CD4-positive, alpha-beta T cell (primary cell): ENCODE measurements at regions of chr3 and their contacts with region 1.

Region 1: DNA sequence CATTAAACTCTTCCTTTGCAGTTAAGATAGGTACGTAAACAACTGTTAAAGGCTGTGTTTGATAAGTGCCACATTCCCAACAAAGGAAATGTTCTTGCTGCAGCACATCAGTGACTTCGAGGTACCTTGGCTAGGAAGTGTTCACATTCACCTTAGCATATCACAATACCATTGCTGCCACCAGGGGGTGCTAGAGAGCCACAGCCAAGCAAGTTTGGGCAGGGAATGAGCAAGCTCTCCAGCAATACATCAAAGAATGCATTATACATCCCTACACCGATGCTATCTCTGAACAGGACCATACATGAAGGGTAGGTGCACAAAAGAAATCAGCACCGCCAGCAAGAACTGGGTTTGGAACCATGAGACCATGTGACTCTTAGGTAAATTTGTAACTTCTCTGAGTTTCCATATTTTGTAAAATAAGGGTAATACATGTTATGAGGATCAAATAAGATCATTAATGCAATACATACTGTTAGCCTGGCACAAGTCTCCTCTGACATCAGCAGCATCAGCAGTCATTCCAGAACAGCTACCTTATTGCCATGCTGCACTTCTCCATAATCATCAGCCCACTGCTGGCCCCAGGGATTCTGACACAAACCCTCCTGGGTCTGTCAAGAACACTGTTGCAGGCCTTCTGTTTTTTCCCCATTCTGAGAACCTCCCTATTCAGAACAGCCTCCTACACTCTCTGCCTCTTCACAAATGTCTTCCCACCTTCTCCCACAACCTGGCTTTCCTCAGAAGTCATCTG is 37.6 kb downstream of the RYK start:
- DNase-seq: peak; percentile 73 to 94 (median 84)
- ATAC-seq: peak; percentile 83
- H3K4me3 ChIP-seq: no peak overlapping the region
- H3K4me3 Mint-ChIP-seq: no peak overlapping the region
- H3K27ac ChIP-seq: no peak overlapping the region
- H3K27ac Mint-ChIP-seq: peak overlapping the region; percentile 19
- H3K4me1 ChIP-seq: no peaks in the 10 kb centered on the region
- H3K4me1 Mint-ChIP-seq: peaks cover 36% of the 10 kb centered on the region
- H3K27me3 ChIP-seq: no peaks in the 10 kb centered on the region
- H3K27me3 Mint-ChIP-seq: no peaks in the 10 kb centered on the region
- CTCF ChIP-seq: peak; percentile 99

Region 2: GRCh38 chr3:134149286-134149685 is 63.8 kb before region 1 on chr3:
- CTCF ChIA-PET with region 1: no interaction called
- POLR2A ChIA-PET with region 1: no interaction called
- intact Hi-C with region 1: no loop called
- DNase-seq: no peak
- ATAC-seq: no peak
- H3K4me3 ChIP-seq: no peak overlapping the region
- H3K4me3 Mint-ChIP-seq: no peak overlapping the region
- H3K27ac ChIP-seq: no peak overlapping the region
- H3K27ac Mint-ChIP-seq: no peak overlapping the region
- H3K4me1 ChIP-seq: no peaks in the 10 kb centered on the region
- H3K4me1 Mint-ChIP-seq: peaks cover 3% of the 10 kb centered on the region
- H3K27me3 ChIP-seq: no peaks in the 10 kb centered on the region
- H3K27me3 Mint-ChIP-seq: no peaks in the 10 kb centered on the region
- CTCF ChIP-seq: no peak

Region 3: DNA sequence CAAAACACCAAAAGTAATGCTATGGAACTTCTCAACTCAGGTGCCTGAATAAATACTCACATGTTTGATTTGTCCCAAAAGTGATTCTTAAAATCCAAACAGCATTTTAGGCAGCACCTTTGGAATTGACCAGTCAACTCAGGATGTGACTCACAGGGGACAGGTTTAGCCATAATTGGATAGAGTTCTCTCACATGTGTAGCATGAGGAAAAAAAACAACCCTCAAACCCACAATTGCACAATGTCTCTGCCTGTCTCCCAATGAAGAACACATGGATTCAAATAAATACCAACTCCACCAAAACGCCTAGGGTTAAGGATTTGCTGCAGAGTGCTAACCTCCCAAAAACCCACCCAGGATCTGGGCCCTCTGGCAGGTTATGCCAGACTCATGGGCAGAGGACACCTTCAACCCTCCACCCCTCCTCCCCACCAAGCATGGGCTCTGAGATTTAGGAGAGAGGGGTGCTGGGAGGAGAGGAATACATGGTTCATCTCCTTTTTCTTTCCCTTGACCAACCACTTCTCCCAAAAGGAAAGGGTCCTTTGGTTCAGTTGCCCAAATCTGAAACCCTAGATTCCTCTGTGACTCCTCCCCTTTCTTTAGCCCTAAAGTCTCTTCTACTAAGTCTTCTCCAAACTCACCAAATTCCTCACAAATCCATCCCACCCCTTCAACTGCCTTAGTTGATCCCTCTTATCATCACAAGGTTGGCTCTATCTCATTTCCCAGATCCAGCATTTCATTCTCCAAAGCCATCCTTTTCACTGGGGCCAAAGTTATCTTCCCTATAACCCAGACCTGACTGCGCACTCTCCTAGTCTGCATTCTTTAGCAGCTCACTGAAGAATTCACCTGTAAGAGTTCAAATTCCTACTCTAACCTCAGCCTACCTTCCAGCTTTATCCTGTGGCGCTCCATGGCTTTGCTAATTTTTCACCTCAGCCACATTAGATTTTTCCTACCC is 29.8 kb after region 1 on chr3:
- CTCF ChIA-PET with region 1: interaction called, 12 read pairs
- POLR2A ChIA-PET with region 1: no interaction called
- intact Hi-C with region 1: no loop called
- DNase-seq: no peak
- ATAC-seq: no peak
- H3K4me3 ChIP-seq: no peak overlapping the region
- H3K4me3 Mint-ChIP-seq: peak overlapping the region; percentile 12
- H3K27ac ChIP-seq: no peak overlapping the region
- H3K27ac Mint-ChIP-seq: no peak overlapping the region
- H3K4me1 ChIP-seq: peaks cover 23% of the 10 kb centered on the region
- H3K4me1 Mint-ChIP-seq: peaks cover 85% of the 10 kb centered on the region
- H3K27me3 ChIP-seq: no peaks in the 10 kb centered on the region
- H3K27me3 Mint-ChIP-seq: no peaks in the 10 kb centered on the region
- CTCF ChIP-seq: no peak

Region 4: GRCh38 chr3:134299185-134299887 is 86.2 kb after region 1 on chr3:
- CTCF ChIA-PET with region 1: no interaction called
- POLR2A ChIA-PET with region 1: no interaction called
- intact Hi-C with region 1: loop called in 1 of 2 experiments (anchors 2 kb)
- DNase-seq: peak in 1 of 14 experiments; percentile 11
- ATAC-seq: no peak
- H3K4me3 ChIP-seq: no peak overlapping the region
- H3K4me3 Mint-ChIP-seq: no peak overlapping the region
- H3K27ac ChIP-seq: no peak overlapping the region
- H3K27ac Mint-ChIP-seq: no peak overlapping the region
- H3K4me1 ChIP-seq: peaks cover 5% of the 10 kb centered on the region
- H3K4me1 Mint-ChIP-seq: no peaks in the 10 kb centered on the region
- H3K27me3 ChIP-seq: no peaks in the 10 kb centered on the region
- H3K27me3 Mint-ChIP-seq: peaks cover 13% of the 10 kb centered on the region
- CTCF ChIP-seq: no peak

Region 5: DNA sequence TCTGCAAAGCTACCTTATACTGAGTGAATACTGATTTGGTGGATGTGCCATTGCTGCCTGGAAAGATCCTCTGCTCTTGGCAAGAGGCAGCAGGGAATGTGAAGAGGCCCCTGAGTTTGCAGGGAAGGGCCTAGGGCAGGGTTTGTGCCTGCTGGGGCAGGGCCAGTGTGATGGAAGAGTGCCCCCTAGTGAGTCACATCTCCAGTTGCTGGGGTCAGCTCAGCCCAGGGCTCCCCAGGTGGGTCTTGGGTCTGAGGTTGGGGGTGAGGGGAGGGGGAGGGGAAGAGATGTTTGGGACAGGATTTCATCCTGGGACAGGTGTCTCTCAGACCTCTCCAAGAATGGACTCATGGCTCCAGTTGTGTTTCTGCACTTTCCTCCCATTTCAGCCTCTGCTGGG is 165.3 kb after region 1 on chr3:
- CTCF ChIA-PET with region 1: interaction called, 5 read pairs
- POLR2A ChIA-PET with region 1: no interaction called
- intact Hi-C with region 1: loop called (anchors 1 to 2 kb)
- DNase-seq: peak in 7 of 14 experiments; percentile 10 to 65 (median 49)
- ATAC-seq: no peak
- H3K4me3 ChIP-seq: no peak overlapping the region
- H3K4me3 Mint-ChIP-seq: no peak overlapping the region
- H3K27ac ChIP-seq: no peak overlapping the region
- H3K27ac Mint-ChIP-seq: no peak overlapping the region
- H3K4me1 ChIP-seq: peaks cover 15% of the 10 kb centered on the region
- H3K4me1 Mint-ChIP-seq: peaks cover 12% of the 10 kb centered on the region
- H3K27me3 ChIP-seq: peaks cover 18 to 23% of the 10 kb centered on the region in 2 experiments
- H3K27me3 Mint-ChIP-seq: peaks cover 43% of the 10 kb centered on the region
- CTCF ChIP-seq: no peak

Region 6: GRCh38 chr3:134485718-134486576 is 272.9 kb after region 1 on chr3 and contains the starts of genes ANAPC13 and CEP63:
- CTCF ChIA-PET with region 1: interaction called, 10 read pairs
- POLR2A ChIA-PET with region 1: no interaction called
- intact Hi-C with region 1: no loop called
- DNase-seq: peak; percentile 84 to 99 (median 90)
- ATAC-seq: peak; percentile 76
- H3K4me3 ChIP-seq: peak within 1 kb of the TSS; percentile 96
- H3K4me3 Mint-ChIP-seq: peak within 1 kb of the TSS; percentile 100
- H3K27ac ChIP-seq: peak within 1 kb of the TSS; percentile 86 to 95
- H3K27ac Mint-ChIP-seq: peak within 1 kb of the TSS; percentile 98
- H3K4me1 ChIP-seq: peaks cover 29% of the 10 kb centered on the region
- H3K4me1 Mint-ChIP-seq: peaks cover 71% of the 10 kb centered on the region
- H3K27me3 ChIP-seq: no peaks in the 10 kb centered on the region
- H3K27me3 Mint-ChIP-seq: no peaks in the 10 kb centered on the region
- CTCF ChIP-seq: no peak
- total RNA-seq, gene ANAPC13: 12.9 to 16.8 TPM
- total RNA-seq, gene CEP63: 13.2 to 15.1 TPM

Region 7: GRCh38 chr3:135240426-135240825 is 1027.3 kb after region 1 on chr3:
- CTCF ChIA-PET with region 1: no interaction called
- POLR2A ChIA-PET with region 1: no interaction called
- intact Hi-C with region 1: no loop called
- DNase-seq: no peak
- ATAC-seq: no peak
- H3K4me3 ChIP-seq: no peak overlapping the region
- H3K4me3 Mint-ChIP-seq: no peak overlapping the region
- H3K27ac ChIP-seq: no peak overlapping the region
- H3K27ac Mint-ChIP-seq: no peak overlapping the region
- H3K4me1 ChIP-seq: no peaks in the 10 kb centered on the region
- H3K4me1 Mint-ChIP-seq: no peaks in the 10 kb centered on the region
- H3K27me3 ChIP-seq: no peaks in the 10 kb centered on the region
- H3K27me3 Mint-ChIP-seq: no peaks in the 10 kb centered on the region
- CTCF ChIP-seq: no peak